ENCODE measurements at regions of chr18 and their contacts with region 1.

Region 1: DNA sequence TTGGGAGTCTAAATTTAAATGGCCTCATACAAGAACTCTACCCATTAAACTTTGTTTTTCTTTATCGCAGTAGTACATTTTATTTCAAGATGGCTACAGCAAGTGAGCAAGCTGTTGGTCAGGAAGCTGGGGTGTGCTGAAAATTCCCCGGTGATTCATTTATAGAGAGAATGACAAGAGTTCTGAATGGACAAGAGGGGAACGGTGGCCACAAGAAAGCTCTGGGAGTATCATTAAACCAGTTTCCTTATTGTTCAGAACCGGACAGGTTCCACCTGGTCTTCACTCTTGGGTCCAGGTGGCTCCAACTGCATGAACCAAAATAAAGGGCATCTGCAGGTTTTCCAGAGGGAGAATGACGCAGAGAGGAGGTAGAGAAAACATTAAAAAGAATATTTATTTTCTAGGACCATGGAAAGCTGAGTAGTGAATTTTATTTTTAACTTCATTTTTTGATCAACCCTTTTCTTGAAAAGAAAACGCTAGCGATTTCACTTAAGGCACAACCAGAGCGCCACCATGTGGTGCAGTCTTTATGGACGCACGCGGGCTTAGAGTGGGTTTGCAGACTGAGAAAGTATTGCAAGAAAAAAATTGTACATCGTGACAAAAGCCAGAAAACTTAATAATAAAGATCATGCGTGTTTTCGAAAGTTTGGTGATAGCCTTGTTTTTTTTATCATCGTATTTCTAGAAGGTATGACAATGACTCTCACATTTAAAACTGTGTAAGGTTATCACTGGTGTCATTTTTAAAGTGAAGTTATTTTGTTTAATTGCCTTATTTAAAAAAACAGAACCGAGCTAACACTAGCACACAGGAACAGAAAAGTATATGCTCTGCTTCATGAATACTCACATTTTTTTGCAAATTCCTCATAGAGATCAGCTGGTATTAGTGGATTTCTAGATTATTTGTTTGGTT is 97.9 kb upstream of the NOL4 start:
- DNase-seq: peak; percentile 87
- H3K4me3 ChIP-seq: no peak overlapping the region
- H3K27ac ChIP-seq: no peak overlapping the region
- H3K4me1 ChIP-seq: peaks cover 4% of the 10 kb centered on the region
- H3K27me3 ChIP-seq: no peaks in the 10 kb centered on the region
- CTCF ChIP-seq: peak; percentile 95

Region 2: DNA sequence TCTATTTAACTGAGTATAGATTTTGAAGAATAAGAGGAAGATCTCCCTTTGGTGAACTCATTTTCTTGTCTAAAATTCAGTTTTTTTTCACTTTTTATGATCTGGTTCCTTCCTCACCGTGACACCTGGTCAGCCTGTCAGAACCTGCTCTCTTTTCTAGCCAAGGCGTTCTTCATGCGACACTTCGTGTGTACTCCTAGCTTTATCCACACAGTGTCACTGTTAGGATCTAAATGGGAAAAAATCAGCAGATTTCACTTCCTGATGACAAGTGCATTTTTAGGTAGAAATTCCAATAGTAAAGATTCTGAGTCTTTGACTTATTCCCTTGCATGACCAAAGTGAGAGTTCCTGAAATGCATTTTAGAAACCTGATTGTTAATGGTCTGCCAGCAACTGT is 1639.6 kb before region 1 on chr18:
- CTCF ChIA-PET with region 1: no interaction called
- POLR2A ChIA-PET with region 1: no interaction called
- intact Hi-C with region 1: no loop called
- DNase-seq: no peak
- H3K4me3 ChIP-seq: no peak overlapping the region
- H3K27ac ChIP-seq: no peak overlapping the region
- H3K4me1 ChIP-seq: no peaks in the 10 kb centered on the region
- H3K27me3 ChIP-seq: no peaks in the 10 kb centered on the region
- CTCF ChIP-seq: peak; percentile 23; the same call in 1 of the 2 replicates

Region 3: DNA sequence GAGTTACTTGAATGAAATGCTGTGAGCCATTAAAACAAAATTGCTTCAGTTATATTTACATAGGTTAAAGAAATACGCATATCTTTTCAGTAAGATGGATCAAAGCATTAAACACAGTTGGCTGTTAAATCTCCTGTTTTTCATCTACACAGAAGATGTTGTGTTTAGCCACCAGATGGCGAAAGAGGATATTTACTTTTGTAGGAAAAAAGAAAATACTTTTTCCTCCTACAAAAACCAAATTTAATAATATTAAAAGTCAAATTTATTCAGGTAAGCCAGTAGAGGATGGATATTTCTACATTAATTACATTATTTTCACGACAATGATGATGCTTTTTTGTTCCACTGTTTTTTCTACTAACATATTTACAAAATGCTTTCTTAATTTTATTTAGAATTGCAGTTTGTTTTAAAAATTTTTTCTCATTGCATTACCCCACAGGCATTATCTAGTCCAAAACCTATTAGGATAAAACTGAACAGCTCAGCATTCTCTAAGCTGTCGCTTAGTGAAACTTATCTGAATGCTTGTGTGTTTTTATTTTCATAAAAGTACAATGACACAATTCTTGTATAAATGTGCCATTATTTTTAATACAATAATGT is 570.9 kb before region 1 on chr18:
- CTCF ChIA-PET with region 1: no interaction called
- POLR2A ChIA-PET with region 1: no interaction called
- intact Hi-C with region 1: loop called (anchors 1 kb)
- DNase-seq: peak; percentile 16
- H3K4me3 ChIP-seq: no peak overlapping the region
- H3K27ac ChIP-seq: no peak overlapping the region
- H3K4me1 ChIP-seq: no peaks in the 10 kb centered on the region
- H3K27me3 ChIP-seq: no peaks in the 10 kb centered on the region
- CTCF ChIP-seq: peak; percentile 65

Region 4: GRCh38 chr18:33839441-33840211 is 483.0 kb before region 1 on chr18:
- CTCF ChIA-PET with region 1: interaction called, 3 read pairs
- POLR2A ChIA-PET with region 1: no interaction called
- intact Hi-C with region 1: loop called (anchors 1 kb)
- DNase-seq: peak; percentile 84
- H3K4me3 ChIP-seq: no peak overlapping the region
- H3K27ac ChIP-seq: no peak overlapping the region
- H3K4me1 ChIP-seq: peaks cover 18% of the 10 kb centered on the region
- H3K27me3 ChIP-seq: no peaks in the 10 kb centered on the region
- CTCF ChIP-seq: peak; percentile 87